Endothelial cell of umbilical vein (primary cell): ENCODE measurements at regions of chr21 and their contacts with region 1.

Region 1: DNA sequence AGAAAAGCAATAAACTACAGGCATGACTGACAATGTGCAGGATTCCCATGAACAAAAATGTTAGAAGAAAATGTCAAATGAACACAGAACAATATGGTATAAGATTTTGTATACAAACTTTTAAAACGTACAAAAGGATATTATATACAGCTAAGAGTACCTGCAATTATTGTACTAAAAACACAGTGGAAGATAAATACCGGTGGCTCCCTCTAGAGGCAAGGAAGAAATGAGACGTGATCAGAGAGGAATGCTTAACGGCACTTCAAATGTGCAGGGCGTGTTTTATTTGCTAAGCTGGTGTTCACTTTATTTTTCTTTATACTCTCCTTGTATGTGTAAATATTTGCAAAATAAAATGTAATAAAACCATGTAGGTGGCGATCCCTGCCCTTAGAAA is 191.8 kb upstream of the SAMSN1 start:
- DNase-seq: peak; percentile 62
- H3K4me3 ChIP-seq: no peak overlapping the region
- H3K27ac ChIP-seq: no peak overlapping the region
- H3K4me1 ChIP-seq: peaks cover 9% of the 10 kb centered on the region
- H3K27me3 ChIP-seq: no peaks in the 10 kb centered on the region
- CTCF ChIP-seq: peak; percentile 50 to 51
- POLR2A ChIP-seq: no peak

Region 2: DNA sequence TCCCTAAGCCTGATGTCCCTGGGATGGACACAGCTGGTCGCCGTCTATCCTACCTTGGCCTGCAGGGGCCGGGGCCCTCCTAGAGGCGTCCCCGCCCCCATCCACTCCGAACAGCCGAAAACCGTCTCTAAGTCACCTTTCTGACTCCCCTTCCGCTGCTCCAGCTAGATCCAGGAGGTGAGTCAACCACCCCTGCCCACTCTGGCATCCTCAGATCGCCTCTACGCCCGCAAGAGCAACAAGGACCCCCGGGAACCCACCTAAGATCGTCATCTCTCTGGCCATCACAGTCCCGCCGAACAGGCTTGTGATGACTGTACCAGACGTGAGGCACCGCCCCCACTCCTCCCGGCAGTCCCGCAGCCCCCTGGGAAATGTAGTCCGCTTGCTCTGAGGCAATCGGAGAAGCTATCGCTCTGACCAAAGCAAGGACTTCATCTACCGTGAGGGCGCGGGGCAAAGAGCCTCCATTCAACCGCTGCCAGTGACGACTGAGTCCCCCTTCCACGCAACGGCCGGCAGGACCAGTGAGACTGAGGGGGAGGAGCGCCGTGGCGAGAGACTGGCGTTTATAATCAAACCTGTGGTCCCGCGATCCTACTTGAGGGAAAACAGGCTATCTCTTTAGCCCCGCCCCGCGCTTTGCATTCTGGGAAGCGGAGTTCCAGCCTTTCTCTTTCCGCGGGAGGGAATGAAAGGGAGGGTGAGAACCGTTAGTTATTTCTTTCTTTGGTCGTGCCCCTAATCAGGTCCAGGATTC is 354.9 kb before region 1 on chr21 and contains the start of gene HSPA13:
- CTCF ChIA-PET with region 1: no interaction called
- POLR2A ChIA-PET with region 1: no interaction called
- dilution Hi-C with region 1: no loop called
- intact Hi-C with region 1: loop called (anchors 2 kb)
- DNase-seq: peak; percentile 100
- H3K4me3 ChIP-seq: peak within 1 kb of the TSS; percentile 85 to 91 (median 85)
- H3K27ac ChIP-seq: peak within 1 kb of the TSS; percentile 93
- H3K4me1 ChIP-seq: peaks cover 26% of the 10 kb centered on the region
- H3K27me3 ChIP-seq: no peaks in the 10 kb centered on the region
- CTCF ChIP-seq: peak in 1 of 2 donors; percentile 14
- POLR2A ChIP-seq: peak; percentile 76
- total RNA-seq, gene HSPA13: 40.4 and 44.8 TPM in 2 replicates

Region 3: DNA sequence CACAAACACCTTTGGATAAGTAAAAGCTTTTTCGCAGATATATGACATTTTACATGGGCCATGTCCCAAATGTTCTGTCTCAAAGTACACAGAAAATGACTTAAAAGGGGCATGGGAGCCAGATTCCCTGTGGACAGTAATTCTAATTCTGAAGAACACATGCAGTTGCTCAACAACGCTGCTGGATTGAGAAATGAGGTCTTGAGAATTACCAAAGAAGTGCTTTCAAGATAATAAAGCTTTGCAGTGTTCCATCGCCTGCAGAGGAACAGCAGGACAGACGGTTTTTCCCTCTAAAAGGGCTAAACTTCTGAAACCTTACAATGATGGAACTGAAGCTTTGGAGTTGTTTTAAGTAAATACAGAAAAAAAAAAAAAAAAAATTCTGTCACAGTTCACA is 299.7 kb before region 1 on chr21:
- CTCF ChIA-PET with region 1: interaction called, 11 read pairs
- POLR2A ChIA-PET with region 1: no interaction called
- dilution Hi-C with region 1: no loop called
- intact Hi-C with region 1: no loop called
- DNase-seq: no peak
- H3K4me3 ChIP-seq: no peak overlapping the region
- H3K27ac ChIP-seq: no peak overlapping the region
- H3K4me1 ChIP-seq: no peaks in the 10 kb centered on the region
- H3K27me3 ChIP-seq: no peaks in the 10 kb centered on the region
- CTCF ChIP-seq: no peak
- POLR2A ChIP-seq: no peak

Region 4: DNA sequence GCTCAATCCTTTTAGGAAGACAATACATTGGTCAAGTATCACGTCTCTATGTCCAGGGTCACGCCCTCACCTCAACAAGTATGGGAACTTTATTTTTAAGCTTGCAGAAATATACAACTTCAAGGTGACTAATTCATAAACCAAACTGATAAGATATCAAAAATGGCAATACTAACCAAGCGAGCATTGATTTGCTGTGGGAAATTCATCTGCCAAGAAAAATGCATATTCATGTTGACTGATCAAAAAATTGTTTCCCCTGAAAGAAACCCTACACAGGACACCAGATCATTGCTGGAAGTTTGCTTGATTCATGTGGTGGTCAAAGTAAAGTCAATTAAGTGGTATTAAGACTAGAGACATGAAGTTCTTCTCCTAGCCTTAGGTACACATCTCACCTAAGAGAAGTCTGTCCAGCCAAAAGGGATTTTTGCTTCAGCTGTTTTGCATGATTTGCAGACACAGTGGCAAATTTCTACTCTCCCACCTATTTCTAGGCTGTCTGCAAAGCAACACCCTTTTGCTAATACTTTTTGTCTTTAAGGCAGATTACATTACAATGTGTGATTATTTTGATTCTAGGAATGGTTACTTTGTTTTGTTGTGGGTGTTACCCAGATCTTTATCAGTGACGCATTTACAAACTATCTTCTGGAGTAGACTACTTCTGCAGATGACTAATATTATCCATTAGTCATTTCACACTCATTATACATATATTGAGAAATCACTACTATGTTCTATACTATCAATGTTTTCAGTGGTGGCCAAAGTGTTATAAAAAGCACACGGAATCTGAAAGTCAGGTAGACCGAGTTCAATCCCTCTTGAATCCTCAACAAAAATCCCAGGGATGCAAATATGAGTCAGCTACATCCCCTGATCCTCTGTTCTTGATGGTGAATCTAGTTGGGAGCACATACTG is 204.2 kb before region 1 on chr21:
- CTCF ChIA-PET with region 1: interaction called, 12 read pairs
- POLR2A ChIA-PET with region 1: no interaction called
- dilution Hi-C with region 1: no loop called
- intact Hi-C with region 1: no loop called
- DNase-seq: peak; percentile 77
- H3K4me3 ChIP-seq: peak overlapping the region in 1 of 3 experiments; percentile 39
- H3K27ac ChIP-seq: peak overlapping the region; percentile 91
- H3K4me1 ChIP-seq: peaks cover 17% of the 10 kb centered on the region
- H3K27me3 ChIP-seq: no peaks in the 10 kb centered on the region
- CTCF ChIP-seq: no peak
- POLR2A ChIP-seq: no peak

Region 5: GRCh38 chr21:14602382-14602958 is 135.5 kb before region 1 on chr21:
- CTCF ChIA-PET with region 1: interaction called, 11 read pairs
- POLR2A ChIA-PET with region 1: no interaction called
- dilution Hi-C with region 1: no loop called
- intact Hi-C with region 1: no loop called
- DNase-seq: no peak
- H3K4me3 ChIP-seq: no peak overlapping the region
- H3K27ac ChIP-seq: peak overlapping the region; percentile 57
- H3K4me1 ChIP-seq: peaks cover 15% of the 10 kb centered on the region
- H3K27me3 ChIP-seq: no peaks in the 10 kb centered on the region
- CTCF ChIP-seq: no peak
- POLR2A ChIP-seq: no peak

Region 6: DNA sequence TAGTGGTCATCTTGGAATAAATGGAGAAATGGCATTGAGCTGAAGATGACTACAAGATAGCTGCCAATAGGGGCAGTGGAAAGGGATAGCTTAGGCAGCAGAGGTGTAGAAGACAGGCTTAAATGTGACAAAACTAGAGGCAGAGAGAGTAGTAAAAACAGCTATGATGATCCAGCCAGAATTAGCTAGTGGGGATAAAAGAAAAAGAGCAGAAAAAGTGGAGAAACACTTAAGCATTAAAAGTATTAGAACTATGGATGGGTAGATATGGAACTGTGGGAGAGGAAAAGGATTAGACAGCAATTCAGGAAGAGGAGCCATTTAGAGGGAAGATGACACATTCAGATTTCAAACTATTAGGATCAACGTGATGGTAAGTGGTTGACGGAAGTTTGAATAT is 10.7 kb after region 1 on chr21:
- CTCF ChIA-PET with region 1: interaction called, 10 read pairs
- POLR2A ChIA-PET with region 1: no interaction called
- dilution Hi-C with region 1: no loop called
- intact Hi-C with region 1: no loop called
- DNase-seq: no peak
- H3K4me3 ChIP-seq: no peak overlapping the region
- H3K27ac ChIP-seq: no peak overlapping the region
- H3K4me1 ChIP-seq: no peaks in the 10 kb centered on the region
- H3K27me3 ChIP-seq: no peaks in the 10 kb centered on the region
- CTCF ChIP-seq: no peak
- POLR2A ChIP-seq: no peak

Region 7: GRCh38 chr21:14911351-14911750 is 173.4 kb after region 1 on chr21:
- CTCF ChIA-PET with region 1: no interaction called
- POLR2A ChIA-PET with region 1: no interaction called
- dilution Hi-C with region 1: no loop called
- intact Hi-C with region 1: no loop called
- DNase-seq: no peak
- H3K4me3 ChIP-seq: no peak overlapping the region
- H3K27ac ChIP-seq: no peak overlapping the region
- H3K4me1 ChIP-seq: no peaks in the 10 kb centered on the region
- H3K27me3 ChIP-seq: no peaks in the 10 kb centered on the region
- CTCF ChIP-seq: no peak
- POLR2A ChIP-seq: no peak

Region 8: GRCh38 chr21:15015622-15016471 is 277.9 kb after region 1 on chr21:
- CTCF ChIA-PET with region 1: no interaction called
- POLR2A ChIA-PET with region 1: no interaction called
- dilution Hi-C with region 1: no loop called
- intact Hi-C with region 1: no loop called
- DNase-seq: no peak
- H3K4me3 ChIP-seq: no peak overlapping the region
- H3K27ac ChIP-seq: no peak overlapping the region
- H3K4me1 ChIP-seq: no peaks in the 10 kb centered on the region
- H3K27me3 ChIP-seq: no peaks in the 10 kb centered on the region
- CTCF ChIP-seq: no peak
- POLR2A ChIP-seq: no peak